Testis (tissue), 5 donors: ENCODE measurements at regions of chr5 and their contacts with region 1.

Region 1: DNA sequence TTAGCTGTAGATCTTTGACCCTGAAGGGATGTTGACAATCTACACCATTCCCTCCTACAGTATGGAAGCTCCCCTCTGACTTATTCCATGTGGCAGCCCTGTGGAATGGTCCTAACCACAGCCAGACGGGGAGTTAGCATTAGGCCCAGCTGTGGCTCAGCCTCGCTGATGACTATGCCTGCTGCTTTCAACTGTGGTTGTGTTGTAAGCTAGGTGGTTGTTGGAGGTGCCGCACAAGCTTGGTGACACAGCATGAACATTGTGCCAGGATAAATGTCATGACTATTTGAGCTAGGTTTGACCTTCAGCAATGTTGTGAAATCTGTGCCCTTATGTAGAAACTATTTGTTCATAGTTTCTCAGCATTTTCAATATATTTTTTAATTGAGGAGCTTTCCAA is 40.6 kb downstream of the SGCD start:
- DNase-seq: no peak
- H3K4me3 ChIP-seq: no peak overlapping the region
- H3K27ac ChIP-seq: no peak overlapping the region
- H3K4me1 ChIP-seq: no peaks in the 10 kb centered on the region
- H3K27me3 ChIP-seq: no peaks in the 10 kb centered on the region
- CTCF ChIP-seq: no peak
- POLR2A ChIP-seq: no peak

Region 2: GRCh38 chr5:155402927-155403670 is 964.5 kb before region 1 on chr5:
- intact Hi-C with region 1: loop called (anchors 10 kb)
- DNase-seq: no peak
- H3K4me3 ChIP-seq: no peak overlapping the region
- H3K27ac ChIP-seq: no peak overlapping the region
- H3K4me1 ChIP-seq: no peaks in the 10 kb centered on the region
- H3K27me3 ChIP-seq: no peaks in the 10 kb centered on the region
- CTCF ChIP-seq: no peak
- POLR2A ChIP-seq: no peak

Region 3: GRCh38 chr5:156755421-156756087 is 388.0 kb after region 1 on chr5:
- intact Hi-C with region 1: no loop called
- DNase-seq: no peak
- H3K4me3 ChIP-seq: no peak overlapping the region
- H3K27ac ChIP-seq: no peak overlapping the region
- H3K4me1 ChIP-seq: no peaks in the 10 kb centered on the region
- H3K27me3 ChIP-seq: no peaks in the 10 kb centered on the region
- CTCF ChIP-seq: no peak
- POLR2A ChIP-seq: no peak